ENCODE measurements at regions of chr3 and their contacts with region 1.

Region 1: GRCh38 chr3:195522254-195523023 is 20.7 kb downstream of the PPP1R2 start:
- DNase-seq: peak; percentile 57
- CTCF ChIP-seq: peak; percentile 46

Region 2: GRCh38 chr3:195271116-195271858 is 251.2 kb before region 1 on chr3 and contains the start of gene XXYLT1:
- in situ Hi-C with region 1: loop called (anchors 5 kb)
- DNase-seq: peak; percentile 92
- CTCF ChIP-seq: peak; percentile 99

Region 3: DNA sequence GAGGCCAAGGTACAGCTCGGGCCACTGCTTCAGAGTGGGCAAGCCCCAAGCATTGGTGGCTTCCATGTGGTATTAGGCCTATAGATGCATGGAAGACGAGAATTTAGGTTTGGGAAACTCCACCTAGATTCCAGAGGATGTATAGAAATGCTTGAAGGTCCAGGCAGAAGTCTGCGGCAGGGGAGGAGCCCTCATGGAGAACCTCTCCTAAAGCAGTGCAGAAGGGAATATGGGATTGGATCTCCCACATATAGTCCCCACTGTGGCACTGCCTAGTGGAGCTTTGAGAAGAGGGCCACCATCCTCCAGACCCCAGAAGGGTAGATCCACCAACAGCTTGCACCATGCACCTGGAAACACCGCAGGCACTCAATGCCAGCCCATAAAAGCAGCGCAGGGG is 203.4 kb before region 1 on chr3:
- in situ Hi-C with region 1: no loop called
- DNase-seq: no peak
- CTCF ChIP-seq: no peak